ENCODE measurements at regions of chr5 and their contacts with region 1.

Region 1: GRCh38 chr5:169583424-169584204 is at the start of gene SPDL1:
- DNase-seq: peak; percentile 81 to 97
- ATAC-seq: peak; percentile 87 to 95
- H3K4me3 ChIP-seq: peak within 1 kb of the TSS; percentile 83
- H3K27ac ChIP-seq: peak within 1 kb of the TSS; percentile 84 to 95
- H3K4me1 ChIP-seq: peaks cover 38% of the 10 kb centered on the region
- CTCF ChIP-seq: no peak
- EP300 ChIP-seq: no peak
- POLR2A ChIP-seq: peak; percentile 79
- RAD21 ChIP-seq: peak in 1 of 2 experiments; percentile 8; a peak in 1 of 5 replicates
- polyA plus RNA-seq, gene SPDL1: 62.1 and 103 TPM in 2 replicates

Region 2: DNA sequence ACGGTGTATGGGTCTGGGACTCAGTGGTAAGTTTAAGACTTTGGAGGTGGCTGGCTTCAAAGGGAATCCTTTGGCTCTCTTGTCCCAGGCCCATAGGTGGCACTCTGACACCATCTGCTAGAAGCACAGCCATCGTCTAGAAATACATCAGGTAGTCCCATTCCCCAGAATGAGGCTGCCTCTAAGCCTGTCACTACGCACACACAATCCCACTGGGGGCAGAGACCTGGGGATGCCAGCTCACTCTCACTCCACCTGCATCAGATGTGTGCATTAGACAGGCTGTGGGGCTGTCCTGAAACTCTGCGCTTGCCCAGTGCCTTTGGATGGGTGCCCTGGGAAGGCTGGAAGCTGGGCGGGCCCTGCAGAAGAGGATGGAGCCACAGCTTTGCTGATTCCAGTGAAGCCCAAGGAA is 877.0 kb before region 1 on chr5:
- CTCF ChIA-PET with region 1: interaction called, 28 read pairs
- POLR2A ChIA-PET with region 1: no interaction called
- DNase-seq: peak; percentile 36 to 49
- ATAC-seq: peak; percentile 80 to 87
- H3K4me3 ChIP-seq: no peak overlapping the region
- H3K27ac ChIP-seq: no peak overlapping the region
- H3K4me1 ChIP-seq: no peaks in the 10 kb centered on the region; the same call in 2 of the 3 replicates
- CTCF ChIP-seq: peak; percentile 69
- EP300 ChIP-seq: no peak
- POLR2A ChIP-seq: no peak
- RAD21 ChIP-seq: peak; percentile 83 to 85

Region 3: GRCh38 chr5:169567079-169567478 is 16.5 kb before region 1 on chr5:
- CTCF ChIA-PET with region 1: interaction called, 18 read pairs
- POLR2A ChIA-PET with region 1: no interaction called
- DNase-seq: no peak
- ATAC-seq: peak in 1 of 2 experiments; percentile 59; a peak in 2 of 6 replicates
- H3K4me3 ChIP-seq: no peak overlapping the region
- H3K27ac ChIP-seq: no peak overlapping the region
- H3K4me1 ChIP-seq: no peaks in the 10 kb centered on the region
- CTCF ChIP-seq: no peak
- EP300 ChIP-seq: no peak
- POLR2A ChIP-seq: no peak
- RAD21 ChIP-seq: no peak

Region 4: GRCh38 chr5:169695919-169696490 is 112.4 kb after region 1 on chr5:
- CTCF ChIA-PET with region 1: interaction called, 3 read pairs
- POLR2A ChIA-PET with region 1: interaction called, 19 read pairs
- DNase-seq: peak; percentile 85 to 86
- ATAC-seq: peak; percentile 89 to 90
- H3K4me3 ChIP-seq: no peak overlapping the region
- H3K27ac ChIP-seq: peak overlapping the region; percentile 83 to 85
- H3K4me1 ChIP-seq: peaks cover 42% of the 10 kb centered on the region
- CTCF ChIP-seq: no peak
- EP300 ChIP-seq: peak; percentile 60 to 83; a peak in 4 of 5 replicates
- POLR2A ChIP-seq: no peak
- RAD21 ChIP-seq: peak in 1 of 2 experiments; percentile 42; a peak in 2 of 5 replicates

Measured in A549 (cell line).